A549 (cell line): ENCODE measurements at regions of chr6 and their contacts with region 1.

Region 1: DNA sequence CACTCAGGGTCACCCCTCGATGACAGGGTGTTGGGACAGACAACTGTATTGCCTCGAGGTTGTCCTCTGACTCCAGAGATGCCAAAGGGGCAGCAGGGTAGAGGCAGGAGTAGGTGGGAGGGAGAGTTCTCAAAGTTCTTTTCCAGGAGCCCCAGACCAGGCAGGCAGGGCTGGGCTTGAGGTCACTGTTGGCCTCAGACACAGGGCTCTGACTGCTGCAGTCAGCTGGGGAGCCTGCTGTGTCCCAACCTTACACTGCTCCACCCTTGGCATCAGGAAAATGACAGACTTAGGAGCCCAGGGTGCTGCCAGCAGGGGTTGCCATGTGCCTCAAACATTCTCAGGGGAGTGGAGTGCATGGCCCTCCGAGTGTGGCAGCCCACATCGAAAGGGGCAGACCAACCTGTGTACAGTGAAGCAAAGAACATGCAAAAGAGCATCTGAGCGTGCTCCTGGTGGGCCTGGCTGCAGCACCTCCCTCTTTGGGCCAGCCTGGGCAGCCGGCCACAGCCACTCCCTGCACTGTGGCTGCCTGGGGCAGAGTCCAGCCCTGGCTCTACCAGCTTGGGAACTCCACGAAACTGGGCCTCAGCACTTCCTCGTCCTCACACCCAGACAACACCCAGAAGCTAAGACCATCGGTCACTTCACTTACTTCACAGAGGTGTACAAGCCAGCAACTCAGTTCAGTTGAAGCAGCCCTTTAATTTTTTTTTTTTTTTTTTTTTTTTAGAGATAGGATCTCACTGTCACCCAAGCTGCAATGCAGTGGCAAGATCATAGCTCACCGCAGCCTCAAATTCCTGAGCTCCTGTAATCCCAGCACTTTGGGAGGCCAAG is 24.0 kb downstream of the C6orf132 start:
- DNase-seq: peak; percentile 48 to 89
- ATAC-seq: peak; percentile 93 to 95
- H3K4me3 ChIP-seq: no peak overlapping the region
- H3K27ac ChIP-seq: peak overlapping the region; percentile 65 to 87
- H3K4me1 ChIP-seq: peaks cover 64% of the 10 kb centered on the region
- CTCF ChIP-seq: no peak
- EP300 ChIP-seq: no peak
- POLR2A ChIP-seq: no peak
- RAD21 ChIP-seq: no peak

Region 2: DNA sequence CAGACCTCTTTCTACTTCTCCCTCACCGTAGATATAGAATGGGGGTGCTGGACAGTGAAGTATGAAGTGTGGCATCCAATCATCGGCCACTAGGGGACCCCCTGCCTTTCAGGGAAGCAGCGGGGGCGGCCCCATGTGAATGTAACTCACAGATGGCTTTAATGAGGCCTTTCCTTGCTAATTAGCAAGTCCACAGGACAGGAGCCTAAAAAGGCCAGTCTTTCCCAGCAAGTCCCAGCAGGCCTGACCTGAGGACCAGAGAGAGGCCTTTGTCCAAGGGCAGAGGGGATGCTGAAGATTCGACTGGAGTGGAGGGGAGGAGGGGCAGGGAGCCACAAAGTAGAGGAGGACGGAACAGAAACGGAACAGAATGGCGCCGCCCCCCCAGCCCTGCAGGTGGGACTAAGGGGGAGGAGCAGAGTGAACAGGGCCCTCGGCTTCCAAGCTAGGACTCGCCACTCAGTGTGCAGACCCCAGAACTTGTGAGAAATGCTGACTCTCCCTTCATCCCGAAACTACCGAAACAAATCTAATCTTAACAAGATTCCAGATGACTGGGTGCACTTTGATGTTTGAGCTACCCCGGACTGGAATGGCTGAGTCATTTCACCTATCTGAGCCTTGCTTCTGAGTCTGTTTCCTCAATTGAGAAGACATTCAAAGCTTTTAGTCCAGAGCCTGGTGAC is 18.3 kb after region 1 on chr6:
- CTCF ChIA-PET with region 1: interaction called, 6 read pairs
- POLR2A ChIA-PET with region 1: interaction called, 12 read pairs
- DNase-seq: peak; percentile 58 to 62
- ATAC-seq: peak; percentile 55 to 64; a peak in 5 of 6 replicates
- H3K4me3 ChIP-seq: no peak overlapping the region
- H3K27ac ChIP-seq: peak overlapping the region; percentile 84 to 91
- H3K4me1 ChIP-seq: peaks cover 54% of the 10 kb centered on the region
- CTCF ChIP-seq: peak; percentile 28
- EP300 ChIP-seq: no peak
- POLR2A ChIP-seq: no peak
- RAD21 ChIP-seq: no peak